Lower leg skin (tissue), 4 donors: ENCODE measurements at regions of chr6 and their contacts with region 1.

Region 1: DNA sequence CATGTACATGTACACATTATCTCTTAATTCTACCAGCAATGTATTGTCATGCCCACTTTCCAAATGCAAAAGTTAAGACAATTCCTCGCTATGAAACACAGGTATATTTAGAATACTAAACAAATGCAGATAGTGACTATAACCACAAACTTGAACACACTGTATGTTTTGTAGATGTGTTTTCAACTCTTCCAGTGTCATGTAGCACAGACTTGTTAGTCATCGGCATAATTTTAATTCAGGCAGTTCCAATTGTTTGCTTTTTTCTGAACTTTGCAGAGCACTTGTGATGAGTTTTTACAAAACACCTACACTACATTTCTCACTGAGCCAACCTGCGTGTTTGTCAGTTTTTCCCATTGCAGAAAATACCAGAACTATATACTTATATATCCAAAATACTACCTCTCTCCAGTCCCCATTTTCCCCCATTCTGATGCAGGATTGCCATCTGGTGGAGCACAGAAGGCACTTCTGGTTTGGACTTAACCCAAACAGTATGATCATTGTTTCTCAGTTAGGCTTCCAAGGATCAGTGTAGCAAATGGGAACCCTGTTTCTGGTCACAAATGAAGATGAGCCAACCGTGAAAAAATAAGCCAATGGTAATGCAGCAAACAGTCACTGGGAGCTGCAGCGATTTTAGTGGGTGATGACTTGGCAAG is 143.4 kb downstream of the ADGRB3 start:
- DNase-seq: no peak
- H3K4me3 ChIP-seq: no peak overlapping the region
- CTCF ChIP-seq: no peak
- POLR2A ChIP-seq: no peak

Region 2: GRCh38 chr6:67615796-67616195 is 1162.7 kb before region 1 on chr6:
- intact Hi-C with region 1: loop called (anchors 10 kb)
- DNase-seq: no peak
- H3K4me3 ChIP-seq: no peak overlapping the region
- CTCF ChIP-seq: no peak
- POLR2A ChIP-seq: no peak